CD8-positive, alpha-beta T cell (primary cell): ENCODE measurements at regions of chr12 and their contacts with region 1.

Region 1: DNA sequence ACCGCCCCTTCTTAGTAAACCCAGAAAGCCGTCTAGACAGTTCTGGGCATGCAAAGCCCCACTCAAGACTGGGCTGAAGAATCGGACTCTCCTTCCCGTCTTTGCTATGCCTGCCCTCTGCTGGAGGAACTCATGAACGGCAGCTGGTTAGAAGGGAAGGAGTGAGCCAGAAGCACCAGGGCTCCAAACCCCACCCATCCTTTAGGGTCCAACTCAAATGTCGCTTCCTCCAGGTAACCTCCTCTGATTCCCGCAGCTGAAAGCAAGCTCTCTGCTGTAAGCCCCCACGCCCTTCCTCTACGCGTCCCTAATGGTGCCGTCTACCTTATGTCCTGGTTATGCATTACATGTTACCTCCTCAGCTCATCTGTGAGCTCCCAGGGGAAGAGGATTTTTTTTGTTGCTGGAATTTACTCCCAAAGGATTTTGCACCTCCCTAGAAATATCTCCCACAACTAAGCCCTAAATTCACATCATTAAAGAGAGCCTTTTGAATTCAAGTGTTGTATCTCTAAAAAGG is 59.0 kb upstream of the SCN8A start:
- DNase-seq: peak; percentile 49 to 84 (median 73)
- ATAC-seq: peak; percentile 89
- H3K4me3 ChIP-seq: no peak overlapping the region
- H3K4me3 Mint-ChIP-seq: no peak overlapping the region
- H3K27ac ChIP-seq: no peak overlapping the region
- H3K27ac Mint-ChIP-seq: no peak overlapping the region
- H3K4me1 ChIP-seq: no peaks in the 10 kb centered on the region
- H3K4me1 Mint-ChIP-seq: peaks cover 7% of the 10 kb centered on the region
- H3K27me3 ChIP-seq: no peaks in the 10 kb centered on the region
- H3K27me3 Mint-ChIP-seq: peaks cover 2% of the 10 kb centered on the region
- CTCF ChIP-seq: peak; percentile 82

Region 2: DNA sequence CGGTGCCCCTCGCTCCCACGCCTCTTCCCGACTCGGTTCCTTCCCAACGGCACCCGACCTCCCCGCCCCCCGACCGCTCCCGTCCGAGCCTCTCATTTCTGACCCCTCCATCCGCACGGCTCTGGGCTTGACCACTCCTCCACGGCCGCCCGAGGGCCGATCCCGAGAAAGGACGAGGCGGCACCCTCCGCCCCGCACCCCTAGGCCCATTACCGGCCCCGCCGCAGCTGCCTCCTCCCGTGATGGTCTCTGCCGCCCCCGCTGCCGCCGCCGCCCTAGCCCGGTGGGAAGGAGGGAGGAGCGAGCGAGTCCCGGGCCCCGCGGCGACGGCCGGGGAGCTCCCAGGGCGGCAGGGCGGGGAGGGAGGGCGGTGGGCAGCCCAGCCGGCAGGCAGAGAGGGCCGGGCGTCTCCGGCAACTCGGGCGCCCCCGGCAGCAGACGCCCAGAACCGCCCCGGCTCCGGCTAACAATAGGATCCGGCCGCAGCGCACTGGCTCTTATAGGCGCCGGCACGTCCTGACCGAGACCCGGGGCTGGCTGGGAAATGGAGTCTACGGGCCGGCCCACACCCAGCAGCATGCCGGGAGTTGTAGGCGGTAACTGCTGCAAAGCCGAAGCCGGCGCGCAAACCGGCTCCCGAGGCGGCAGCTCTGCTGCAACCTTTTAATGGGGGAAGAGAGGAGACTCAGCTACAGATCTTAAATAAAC is 448.8 kb before region 1 on chr12 and contains the start of gene CSRNP2:
- CTCF ChIA-PET with region 1: no interaction called
- POLR2A ChIA-PET with region 1: no interaction called
- intact Hi-C with region 1: no loop called
- DNase-seq: peak; percentile 90 to 97 (median 94)
- ATAC-seq: peak; percentile 99
- H3K4me3 ChIP-seq: peak within 1 kb of the TSS; percentile 88
- H3K4me3 Mint-ChIP-seq: peak within 1 kb of the TSS; percentile 94
- H3K27ac ChIP-seq: peak within 1 kb of the TSS; percentile 61 to 62
- H3K27ac Mint-ChIP-seq: peak within 1 kb of the TSS; percentile 91
- H3K4me1 ChIP-seq: peaks cover 12% of the 10 kb centered on the region
- H3K4me1 Mint-ChIP-seq: peaks cover 36% of the 10 kb centered on the region
- H3K27me3 ChIP-seq: no peaks in the 10 kb centered on the region
- H3K27me3 Mint-ChIP-seq: no peaks in the 10 kb centered on the region
- CTCF ChIP-seq: no peak
- total RNA-seq, gene CSRNP2: 19.5 to 19.9 TPM

Region 3: GRCh38 chr12:51270067-51270970 is 261.7 kb before region 1 on chr12 and contains the start of gene SMAGP:
- CTCF ChIA-PET with region 1: interaction called, 4 read pairs
- POLR2A ChIA-PET with region 1: no interaction called
- intact Hi-C with region 1: loop called in 1 of 2 experiments (anchors 10 kb)
- DNase-seq: peak in 8 of 9 experiments; percentile 28 to 76 (median 52)
- ATAC-seq: peak; percentile 50
- H3K4me3 ChIP-seq: peak within 1 kb of the TSS; percentile 54 to 71
- H3K4me3 Mint-ChIP-seq: peak within 1 kb of the TSS; percentile 90
- H3K27ac ChIP-seq: peak within 1 kb of the TSS; percentile 42 to 58
- H3K27ac Mint-ChIP-seq: peak within 1 kb of the TSS; percentile 84
- H3K4me1 ChIP-seq: peaks cover 16% of the 10 kb centered on the region
- H3K4me1 Mint-ChIP-seq: peaks cover 23% of the 10 kb centered on the region
- H3K27me3 ChIP-seq: no peaks in the 10 kb centered on the region
- H3K27me3 Mint-ChIP-seq: no peaks in the 10 kb centered on the region
- CTCF ChIP-seq: no peak
- total RNA-seq, gene SMAGP: 1.9 to 2.3 TPM

Region 4: GRCh38 chr12:51351913-51352532 is 180.0 kb before region 1 on chr12:
- CTCF ChIA-PET with region 1: interaction called, 7 read pairs
- POLR2A ChIA-PET with region 1: no interaction called
- intact Hi-C with region 1: loop called in 1 of 2 experiments (anchors 5 kb)
- DNase-seq: peak in 7 of 9 experiments; percentile 9 to 72 (median 43)
- ATAC-seq: peak; percentile 77
- H3K4me3 ChIP-seq: no peak overlapping the region
- H3K4me3 Mint-ChIP-seq: no peak overlapping the region
- H3K27ac ChIP-seq: no peak overlapping the region
- H3K27ac Mint-ChIP-seq: no peak overlapping the region
- H3K4me1 ChIP-seq: no peaks in the 10 kb centered on the region
- H3K4me1 Mint-ChIP-seq: peaks cover 2% of the 10 kb centered on the region
- H3K27me3 ChIP-seq: no peaks in the 10 kb centered on the region
- H3K27me3 Mint-ChIP-seq: no peaks in the 10 kb centered on the region
- CTCF ChIP-seq: peak; percentile 73

Region 5: GRCh38 chr12:51521554-51522276 is 10.3 kb before region 1 on chr12:
- CTCF ChIA-PET with region 1: interaction called, 16 read pairs
- POLR2A ChIA-PET with region 1: interaction called, 3 read pairs
- intact Hi-C with region 1: no loop called
- DNase-seq: no peak
- ATAC-seq: no peak
- H3K4me3 ChIP-seq: no peak overlapping the region
- H3K4me3 Mint-ChIP-seq: no peak overlapping the region
- H3K27ac ChIP-seq: no peak overlapping the region
- H3K27ac Mint-ChIP-seq: no peak overlapping the region
- H3K4me1 ChIP-seq: no peaks in the 10 kb centered on the region
- H3K4me1 Mint-ChIP-seq: no peaks in the 10 kb centered on the region
- H3K27me3 ChIP-seq: no peaks in the 10 kb centered on the region
- H3K27me3 Mint-ChIP-seq: no peaks in the 10 kb centered on the region
- CTCF ChIP-seq: no peak